Activated CD4-positive, alpha-beta T cell treated with anti-CD3 and anti-CD28 coated beads, Interleukin-2, amount 10 ng/mL, durations not matched to agents 24 days and 14 days (primary cell): ENCODE measurements at regions of chr16 and their contacts with region 1.

Region 1: GRCh38 chr16:11076259-11077018 is 132.1 kb downstream of the CLEC16A start:
- DNase-seq: peak; percentile 84
- H3K4me3 Mint-ChIP-seq: peak overlapping the region; percentile 55
- H3K27ac Mint-ChIP-seq: peak overlapping the region; percentile 90
- H3K4me1 Mint-ChIP-seq: peaks cover 88% of the 10 kb centered on the region
- H3K27me3 Mint-ChIP-seq: no peaks in the 10 kb centered on the region

Region 2: DNA sequence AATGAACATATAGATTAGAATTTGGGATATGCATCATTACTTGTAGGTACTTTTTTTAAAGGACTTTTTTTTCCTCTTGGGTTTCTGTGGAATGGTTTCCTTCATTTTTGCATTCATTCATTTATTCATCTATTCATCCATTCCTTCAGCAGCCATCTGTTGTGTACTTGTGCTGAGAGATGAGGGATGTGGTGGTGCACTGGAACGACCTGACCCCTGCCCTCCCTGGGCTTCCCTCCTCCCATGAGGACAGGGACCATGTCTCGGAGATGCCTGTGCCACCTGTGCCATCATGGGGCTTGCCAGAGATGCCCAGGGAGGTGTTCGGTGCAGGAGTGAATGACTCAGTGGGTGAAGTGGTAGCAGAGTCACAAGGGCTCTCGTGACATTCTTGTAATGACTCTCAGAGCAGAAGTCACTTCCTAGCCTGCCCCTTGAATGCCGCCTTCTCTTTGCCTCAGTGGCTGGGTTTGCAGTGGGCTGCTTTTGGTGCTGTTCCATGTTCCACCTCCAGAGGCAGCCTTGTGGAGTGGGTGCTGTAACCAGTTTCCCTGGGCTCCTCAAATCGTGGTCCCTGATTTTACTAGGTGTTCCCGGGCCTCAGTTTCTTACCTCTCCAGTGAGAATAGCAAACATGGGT is 88.2 kb before region 1 on chr16:
- intact Hi-C with region 1: loop called (anchors 1 kb)
- DNase-seq: peak; percentile 89
- H3K4me3 Mint-ChIP-seq: peak overlapping the region; percentile 66
- H3K27ac Mint-ChIP-seq: peak overlapping the region; percentile 92
- H3K4me1 Mint-ChIP-seq: peaks cover 79% of the 10 kb centered on the region
- H3K27me3 Mint-ChIP-seq: no peaks in the 10 kb centered on the region

Region 3: GRCh38 chr16:11051879-11052808 is 24.3 kb before region 1 on chr16:
- intact Hi-C with region 1: loop called (anchors 1 kb)
- DNase-seq: peak; percentile 93
- H3K4me3 Mint-ChIP-seq: peak overlapping the region; percentile 46
- H3K27ac Mint-ChIP-seq: peak overlapping the region; percentile 89
- H3K4me1 Mint-ChIP-seq: peaks cover 77% of the 10 kb centered on the region
- H3K27me3 Mint-ChIP-seq: no peaks in the 10 kb centered on the region

Region 4: GRCh38 chr16:11088074-11088730 is 11.8 kb after region 1 on chr16:
- intact Hi-C with region 1: loop called (anchors 1 kb)
- DNase-seq: peak; percentile 80
- H3K4me3 Mint-ChIP-seq: no peak overlapping the region
- H3K27ac Mint-ChIP-seq: peak overlapping the region; percentile 80
- H3K4me1 Mint-ChIP-seq: peaks cover 65% of the 10 kb centered on the region
- H3K27me3 Mint-ChIP-seq: no peaks in the 10 kb centered on the region

Region 5: DNA sequence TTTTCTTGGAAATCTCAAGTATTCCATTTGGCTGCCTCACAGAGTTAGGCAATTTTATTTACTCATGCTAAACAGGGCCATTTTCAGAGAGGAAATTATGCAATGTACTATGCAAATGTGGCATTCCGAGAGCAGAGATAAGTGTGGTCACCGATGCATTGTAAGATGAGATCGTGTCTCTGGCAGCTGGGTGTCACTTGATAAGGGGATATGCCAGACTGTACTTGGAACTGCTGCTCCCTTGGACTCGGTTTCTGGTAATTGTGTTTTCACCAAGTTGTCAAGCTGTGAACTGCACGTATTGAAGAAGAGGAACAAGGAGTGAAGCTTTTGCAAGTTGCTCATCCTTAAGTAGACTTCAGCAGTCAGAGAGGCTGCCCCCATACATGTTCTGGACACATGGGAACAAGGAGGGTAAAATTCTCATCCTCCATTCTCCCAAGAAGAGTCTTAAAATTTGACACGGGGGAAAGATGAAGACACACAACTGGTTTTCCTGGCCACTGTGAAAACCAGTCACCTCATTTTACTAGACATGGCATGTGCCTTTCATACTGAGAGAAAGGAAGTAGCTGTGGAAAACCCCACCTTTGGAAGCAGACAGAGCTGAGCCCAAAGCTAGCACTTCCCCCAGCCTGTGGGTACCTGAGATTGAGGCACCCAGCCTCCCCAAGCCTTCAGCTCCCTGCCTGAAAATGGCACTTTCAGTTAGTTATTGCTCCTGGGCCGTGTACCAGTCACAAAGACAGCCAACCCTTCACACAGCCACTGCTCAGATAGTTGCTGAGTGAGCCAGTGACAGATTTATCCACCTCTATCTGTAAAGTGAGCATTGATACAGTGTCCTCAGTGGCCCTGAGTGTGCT is 28.8 kb after region 1 on chr16:
- intact Hi-C with region 1: loop called (anchors 5 kb)
- DNase-seq: peak; percentile 84
- H3K4me3 Mint-ChIP-seq: peak overlapping the region; percentile 73
- H3K27ac Mint-ChIP-seq: peak overlapping the region; percentile 92
- H3K4me1 Mint-ChIP-seq: peaks cover 65% of the 10 kb centered on the region
- H3K27me3 Mint-ChIP-seq: no peaks in the 10 kb centered on the region

Region 6: GRCh38 chr16:11232852-11233726 is 156.7 kb after region 1 on chr16:
- intact Hi-C with region 1: loop called (anchors 1 kb)
- DNase-seq: peak; percentile 98
- H3K4me3 Mint-ChIP-seq: peak overlapping the region; percentile 78
- H3K27ac Mint-ChIP-seq: peak overlapping the region; percentile 98
- H3K4me1 Mint-ChIP-seq: peaks cover 74% of the 10 kb centered on the region
- H3K27me3 Mint-ChIP-seq: no peaks in the 10 kb centered on the region